Naive thymus-derived CD8-positive, alpha-beta T cell (primary cell): ENCODE measurements at regions of chr14 and their contacts with region 1.

Region 1: GRCh38 chr14:55051426-55052268 is at the start of gene MAPK1IP1L:
- DNase-seq: peak; percentile 82 to 94 (median 92)
- ATAC-seq: peak; percentile 88 to 93
- H3K4me3 Mint-ChIP-seq: peak within 1 kb of the TSS; percentile 84 to 94 (median 90)
- H3K27ac Mint-ChIP-seq: peak within 1 kb of the TSS; percentile 90 to 99 (median 98)
- H3K4me1 Mint-ChIP-seq: peaks cover 22 to 49% (median 46%) of the 10 kb centered on the region in 4 donors
- H3K27me3 Mint-ChIP-seq: no peaks in the 10 kb centered on the region
- polyA plus RNA-seq, gene MAPK1IP1L: 59.4 to 75.4 (median 65.7) TPM

Region 2: DNA sequence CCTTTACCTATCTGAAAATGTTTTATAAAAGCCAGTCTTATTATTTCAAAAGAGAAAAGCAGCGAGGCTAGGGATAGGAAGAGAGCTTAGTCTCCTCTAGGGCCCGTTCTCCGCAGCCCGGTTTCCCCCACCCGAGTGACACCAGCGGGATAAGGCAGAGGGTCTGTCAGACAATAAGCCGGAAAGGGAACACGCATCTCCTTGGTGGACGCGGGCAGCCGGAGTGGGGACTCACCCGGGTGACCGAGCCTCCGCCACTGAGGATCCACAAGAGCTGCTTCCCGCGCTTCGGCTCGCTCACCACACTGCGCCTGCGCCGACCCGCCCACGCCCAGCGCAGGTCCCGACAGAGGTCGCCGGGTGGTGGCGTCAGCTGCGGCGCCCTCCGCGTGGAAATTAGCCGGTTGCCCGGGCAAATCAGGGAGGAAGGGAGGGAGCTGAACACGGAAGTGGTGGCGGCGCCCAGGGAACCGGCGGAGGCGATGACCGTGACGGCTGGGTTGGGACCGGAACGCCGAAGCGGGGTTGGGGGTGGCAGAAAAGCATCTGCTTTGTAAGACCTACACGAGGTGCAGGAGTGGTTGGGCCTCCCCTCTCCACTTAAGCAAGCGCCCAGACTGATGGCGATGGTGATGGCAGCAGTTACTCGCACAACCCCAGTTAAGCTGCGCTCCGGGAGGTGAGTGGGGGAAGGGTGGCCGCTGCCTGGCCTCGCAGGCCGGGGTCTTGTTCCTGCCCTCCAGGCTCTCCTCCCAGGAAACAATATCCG is 24.7 kb before region 1 on chr14 and contains the starts of genes SOCS4 and WDHD1:
- POLR2A ChIA-PET with region 1: interaction called, 21 read pairs
- DNase-seq: peak; percentile 91 to 98 (median 96)
- ATAC-seq: peak; percentile 85 to 89
- H3K4me3 Mint-ChIP-seq: peak within 1 kb of the TSS; percentile 87 to 95 (median 94)
- H3K27ac Mint-ChIP-seq: peak within 1 kb of the TSS; percentile 61 to 97 (median 94)
- H3K4me1 Mint-ChIP-seq: peaks cover 26 to 51% (median 42%) of the 10 kb centered on the region in 4 donors
- H3K27me3 Mint-ChIP-seq: no peaks in the 10 kb centered on the region
- polyA plus RNA-seq, gene SOCS4: 1.5 to 2.9 (median 1.9) TPM
- polyA plus RNA-seq, gene WDHD1: 2.2 to 3.8 (median 2.4) TPM

Region 3: GRCh38 chr14:55071870-55072640 is 20.4 kb after region 1 on chr14:
- POLR2A ChIA-PET with region 1: interaction called, 11 read pairs
- DNase-seq: peak in 3 of 10 donors; percentile 22 to 42 (median 31)
- ATAC-seq: peak; percentile 77 to 88
- H3K4me3 Mint-ChIP-seq: peak overlapping the region; percentile 24 to 83 (median 70)
- H3K27ac Mint-ChIP-seq: peak overlapping the region; percentile 68 to 93 (median 91)
- H3K4me1 Mint-ChIP-seq: peaks cover 16 to 41% (median 29%) of the 10 kb centered on the region in 4 donors
- H3K27me3 Mint-ChIP-seq: no peaks in the 10 kb centered on the region

Region 4: GRCh38 chr14:55102141-55102621 is 50.5 kb after region 1 on chr14:
- POLR2A ChIA-PET with region 1: interaction called, 10 read pairs
- DNase-seq: peak in 7 of 10 donors; percentile 4 to 45 (median 34)
- ATAC-seq: peak; percentile 66 to 79
- H3K4me3 Mint-ChIP-seq: peak overlapping the region in 9 of 10 donors; percentile 8 to 72 (median 66)
- H3K27ac Mint-ChIP-seq: peak overlapping the region; percentile 85 to 98 (median 94)
- H3K4me1 Mint-ChIP-seq: peaks cover 15 to 48% (median 44%) of the 10 kb centered on the region in 4 donors
- H3K27me3 Mint-ChIP-seq: no peaks in the 10 kb centered on the region